ENCODE measurements at regions of chr14 and their contacts with region 1.

Region 1: DNA sequence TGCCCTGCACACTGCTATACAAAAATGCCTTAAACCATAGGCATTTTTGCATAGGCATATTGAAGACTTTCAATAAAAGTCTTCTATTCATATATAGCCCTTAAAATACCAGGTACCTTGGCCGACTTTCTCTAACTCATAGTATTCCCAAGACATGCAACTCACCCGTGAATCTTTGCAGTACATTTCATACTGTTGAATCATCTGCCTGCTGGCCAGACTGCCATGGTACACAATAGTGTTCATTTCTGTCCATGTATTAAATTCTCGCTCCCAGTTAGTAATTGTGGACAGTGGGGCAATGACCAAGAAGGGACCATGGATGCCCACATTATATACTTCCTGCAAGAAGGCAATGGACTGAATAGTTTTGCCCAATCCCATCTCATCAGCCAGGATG is 24.3 kb upstream of the SUPT16H start:
- DNase-seq: no peak

Region 2: GRCh38 chr14:21241218-21241819 is 166.8 kb before region 1 on chr14:
- in situ Hi-C with region 1: loop called (anchors 25 kb)
- DNase-seq: peak; percentile 53

Region 3: DNA sequence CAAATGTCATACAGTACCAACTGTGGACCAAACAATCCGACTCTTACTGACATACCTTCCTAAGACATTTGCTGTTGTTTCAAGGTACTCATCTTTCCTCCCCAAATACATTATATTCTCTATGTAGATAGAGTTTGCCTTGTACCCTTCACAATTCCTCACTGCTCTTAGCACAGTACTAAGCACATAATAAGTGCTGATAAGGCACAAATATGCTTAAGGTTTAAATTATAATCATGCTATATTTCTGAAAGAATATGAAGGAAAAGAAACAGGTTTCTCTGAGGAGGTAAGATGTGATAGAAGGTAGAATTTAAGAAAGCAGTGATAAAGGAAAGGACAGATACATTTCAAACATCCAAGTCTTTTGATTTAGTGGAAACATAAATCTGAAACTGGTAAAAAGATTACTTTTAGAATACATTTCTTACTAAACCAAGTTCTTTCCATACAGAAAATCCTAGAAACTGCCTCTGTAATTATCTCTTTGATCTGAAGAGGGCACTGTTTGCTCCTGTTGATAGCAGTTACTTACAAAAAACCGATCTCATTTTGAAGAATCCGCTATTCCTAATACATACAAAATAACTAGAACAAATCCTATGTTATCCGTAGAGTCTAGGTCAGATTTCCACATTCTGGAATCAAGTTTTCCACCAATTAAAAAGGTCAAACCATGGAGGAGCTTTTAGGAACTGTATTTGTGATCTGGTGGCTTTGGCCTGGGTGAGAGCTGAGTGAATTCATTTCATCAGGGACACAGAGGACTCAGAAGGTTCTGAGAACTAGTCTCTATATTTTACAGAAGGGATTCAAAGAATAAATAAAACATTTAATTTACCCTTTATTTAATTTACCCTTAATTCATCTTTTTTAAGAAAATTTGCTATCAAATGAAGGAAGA is 869.0 kb after region 1 on chr14:
- in situ Hi-C with region 1: no loop called
- DNase-seq: peak; percentile 39

Measured in KBM-7 (cell line).